Ovary (tissue), 10 donors: ENCODE measurements at regions of chr11 and their contacts with region 1.

Region 1: DNA sequence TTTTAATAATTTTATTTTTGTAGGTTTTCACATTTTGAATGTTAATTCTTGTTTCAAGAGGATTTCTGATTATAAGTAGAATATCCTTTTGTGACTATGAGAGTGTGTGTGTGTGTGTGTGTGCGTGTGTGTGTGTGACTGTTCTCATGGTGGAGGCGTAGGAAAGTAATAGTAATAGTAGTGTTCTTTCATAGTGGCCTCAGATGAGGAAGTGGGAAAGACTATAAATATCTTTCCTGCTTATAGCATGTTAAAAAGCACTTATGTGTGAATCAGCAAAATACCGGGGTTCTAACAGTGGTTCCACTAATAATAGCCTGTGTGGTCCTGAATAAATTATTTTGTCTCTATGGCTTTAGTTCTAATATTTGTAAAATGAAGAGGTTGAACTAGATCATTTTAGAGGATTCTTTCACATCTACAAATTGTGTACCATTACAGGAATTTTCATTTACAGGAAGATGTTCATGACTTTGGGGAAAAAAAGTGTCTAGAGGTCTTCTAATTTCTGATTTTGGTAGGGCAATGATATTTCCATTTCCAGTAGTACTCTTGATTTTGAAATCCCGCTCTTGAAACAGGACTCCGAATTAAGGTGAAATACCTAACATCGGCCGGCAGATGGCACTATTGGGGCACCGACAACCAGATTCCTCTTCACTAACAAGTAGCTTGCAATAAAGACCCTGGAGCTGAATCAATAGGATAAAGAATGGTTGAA is 29.9 kb upstream of the OR10G7 start:
- DNase-seq: peak; percentile 25 to 72 (median 58)
- H3K4me3 ChIP-seq: no peak overlapping the region
- H3K27ac ChIP-seq: no peak overlapping the region
- H3K4me1 ChIP-seq: no peaks in the 10 kb centered on the region
- H3K27me3 ChIP-seq: no peaks in the 10 kb centered on the region
- CTCF ChIP-seq: peak in 2 of 3 donors; percentile 28 to 41
- EP300 ChIP-seq: no peak
- POLR2A ChIP-seq: no peak

Region 2: GRCh38 chr11:124101737-124102136 is 30.7 kb after region 1 on chr11:
- intact Hi-C with region 1: no loop called
- DNase-seq: no peak
- H3K4me3 ChIP-seq: no peak overlapping the region
- H3K27ac ChIP-seq: no peak overlapping the region
- H3K4me1 ChIP-seq: no peaks in the 10 kb centered on the region
- H3K27me3 ChIP-seq: no peaks in the 10 kb centered on the region
- CTCF ChIP-seq: no peak
- EP300 ChIP-seq: no peak
- POLR2A ChIP-seq: no peak

Region 3: DNA sequence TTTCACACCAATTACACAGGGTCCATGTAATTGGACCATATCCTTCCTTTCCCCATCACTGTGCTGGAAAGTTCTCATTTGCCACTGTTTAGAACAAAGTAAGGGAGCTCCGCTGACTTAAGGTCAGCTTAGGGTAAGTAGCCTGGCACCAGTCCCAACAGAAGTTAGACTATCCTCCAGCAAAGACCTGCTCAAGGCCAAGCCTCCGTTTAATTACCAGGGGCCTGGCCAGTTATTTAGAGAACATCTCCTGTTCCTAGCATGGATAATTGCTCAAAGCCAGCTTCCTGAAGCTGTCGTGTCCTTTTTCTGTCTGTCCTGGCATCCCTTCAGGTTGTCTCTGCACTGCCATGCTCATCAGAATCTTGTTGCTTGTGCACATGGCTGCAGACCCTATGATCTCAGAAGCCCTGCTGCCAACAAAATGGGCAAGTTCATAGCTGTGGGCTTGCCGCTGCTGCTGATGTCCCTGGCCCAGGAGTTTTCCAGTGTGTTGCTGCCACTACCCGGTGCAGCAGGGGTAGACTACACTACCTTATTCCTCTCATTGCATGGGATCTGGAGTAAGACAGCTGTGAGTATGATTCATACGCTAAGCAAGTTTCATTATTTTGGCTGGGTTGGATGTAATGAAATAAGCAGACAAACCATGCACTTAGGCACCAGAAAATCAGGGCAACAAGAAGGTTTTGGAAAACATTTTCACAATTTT is 506.8 kb after region 1 on chr11:
- intact Hi-C with region 1: loop called in 2 of 4 experiments (anchors 10 kb)
- DNase-seq: no peak
- H3K4me3 ChIP-seq: no peak overlapping the region
- H3K27ac ChIP-seq: no peak overlapping the region
- H3K4me1 ChIP-seq: no peaks in the 10 kb centered on the region
- H3K27me3 ChIP-seq: no peaks in the 10 kb centered on the region
- CTCF ChIP-seq: no peak
- EP300 ChIP-seq: no peak
- POLR2A ChIP-seq: no peak

Region 4: DNA sequence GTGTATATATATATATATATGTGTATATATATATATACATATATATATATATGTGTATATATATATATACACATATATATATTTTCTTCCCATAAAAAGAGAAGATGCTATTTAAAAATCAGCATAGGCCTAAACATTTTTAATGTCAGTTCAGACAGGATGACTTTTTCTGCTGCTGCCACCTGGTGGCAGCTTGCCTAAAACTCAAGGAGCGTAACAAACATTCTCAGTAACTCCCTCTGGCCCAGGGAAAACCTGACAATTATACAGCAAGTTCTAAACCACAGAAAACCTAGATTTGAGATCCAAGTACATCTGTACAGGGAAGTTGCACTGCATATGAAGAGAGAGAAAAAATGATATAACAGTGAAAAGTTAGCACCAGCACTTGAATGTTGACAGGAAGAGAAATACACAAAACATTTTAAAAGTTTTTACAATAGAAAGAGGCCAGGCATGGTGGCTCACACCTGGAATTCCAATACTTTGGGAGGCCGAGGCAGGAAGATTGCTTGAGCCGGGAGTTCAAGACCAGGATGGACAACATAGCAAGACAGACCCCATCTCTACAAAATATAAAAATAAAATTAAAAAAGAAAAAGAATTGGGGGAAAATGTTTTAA is 515.3 kb after region 1 on chr11:
- intact Hi-C with region 1: loop called in 1 of 4 experiments (anchors 10 kb)
- DNase-seq: peak in 2 of 5 donors; percentile 20 to 50
- H3K4me3 ChIP-seq: no peak overlapping the region
- H3K27ac ChIP-seq: no peak overlapping the region
- H3K4me1 ChIP-seq: no peaks in the 10 kb centered on the region
- H3K27me3 ChIP-seq: no peaks in the 10 kb centered on the region
- CTCF ChIP-seq: no peak
- EP300 ChIP-seq: no peak
- POLR2A ChIP-seq: no peak